ENCODE measurements at regions of chr7 and their contacts with region 1.

Region 1: GRCh38 chr7:105315357-105315756 is 73.4 kb downstream of the SRPK2 start:
- DNase-seq: no peak
- H3K4me3 Mint-ChIP-seq: no peak overlapping the region
- H3K27ac Mint-ChIP-seq: no peak overlapping the region
- H3K4me1 Mint-ChIP-seq: peaks cover 7% of the 10 kb centered on the region
- H3K27me3 Mint-ChIP-seq: no peaks in the 10 kb centered on the region
- CTCF ChIP-seq: no peak

Region 2: GRCh38 chr7:105304040-105304895 is 11.1 kb before region 1 on chr7:
- CTCF ChIA-PET with region 1: interaction called, 6 read pairs
- POLR2A ChIA-PET with region 1: interaction called, 12 read pairs
- intact Hi-C with region 1: no loop called
- DNase-seq: peak; percentile 66
- H3K4me3 Mint-ChIP-seq: peak overlapping the region; percentile 57
- H3K27ac Mint-ChIP-seq: peak overlapping the region; percentile 69
- H3K4me1 Mint-ChIP-seq: peaks cover 23% of the 10 kb centered on the region
- H3K27me3 Mint-ChIP-seq: no peaks in the 10 kb centered on the region
- CTCF ChIP-seq: no peak